Prostate gland (tissue), 2 donors: ENCODE measurements at regions of chrX and their contacts with region 1.

Region 1: GRCh38 chrX:24081661-24082264 is 27.0 kb downstream of the EIF2S3 start:
- DNase-seq: peak; percentile 18
- H3K4me3 ChIP-seq: no peak overlapping the region
- H3K27ac ChIP-seq: no peak overlapping the region
- H3K4me1 ChIP-seq: no peaks in the 10 kb centered on the region
- H3K27me3 ChIP-seq: no peaks in the 10 kb centered on the region
- CTCF ChIP-seq: peak in 1 of 4 experiments; percentile 17
- POLR2A ChIP-seq: no peak

Region 2: GRCh38 chrX:23773601-23774175 is 308.1 kb before region 1 on chrX:
- intact Hi-C with region 1: no loop called
- DNase-seq: no peak
- H3K4me3 ChIP-seq: no peak overlapping the region
- H3K27ac ChIP-seq: no peak overlapping the region
- H3K4me1 ChIP-seq: no peaks in the 10 kb centered on the region
- H3K27me3 ChIP-seq: no peaks in the 10 kb centered on the region
- CTCF ChIP-seq: no peak
- POLR2A ChIP-seq: no peak

Region 3: GRCh38 chrX:24024819-24025740 is 56.7 kb before region 1 on chrX:
- intact Hi-C with region 1: no loop called
- DNase-seq: peak; percentile 74
- H3K4me3 ChIP-seq: peak overlapping the region; percentile 69
- H3K27ac ChIP-seq: peak overlapping the region; percentile 94 to 95
- H3K4me1 ChIP-seq: no peaks in the 10 kb centered on the region
- H3K27me3 ChIP-seq: no peaks in the 10 kb centered on the region
- CTCF ChIP-seq: peak in 2 of 4 experiments; percentile 9 to 37
- POLR2A ChIP-seq: peak; percentile 77

Region 4: DNA sequence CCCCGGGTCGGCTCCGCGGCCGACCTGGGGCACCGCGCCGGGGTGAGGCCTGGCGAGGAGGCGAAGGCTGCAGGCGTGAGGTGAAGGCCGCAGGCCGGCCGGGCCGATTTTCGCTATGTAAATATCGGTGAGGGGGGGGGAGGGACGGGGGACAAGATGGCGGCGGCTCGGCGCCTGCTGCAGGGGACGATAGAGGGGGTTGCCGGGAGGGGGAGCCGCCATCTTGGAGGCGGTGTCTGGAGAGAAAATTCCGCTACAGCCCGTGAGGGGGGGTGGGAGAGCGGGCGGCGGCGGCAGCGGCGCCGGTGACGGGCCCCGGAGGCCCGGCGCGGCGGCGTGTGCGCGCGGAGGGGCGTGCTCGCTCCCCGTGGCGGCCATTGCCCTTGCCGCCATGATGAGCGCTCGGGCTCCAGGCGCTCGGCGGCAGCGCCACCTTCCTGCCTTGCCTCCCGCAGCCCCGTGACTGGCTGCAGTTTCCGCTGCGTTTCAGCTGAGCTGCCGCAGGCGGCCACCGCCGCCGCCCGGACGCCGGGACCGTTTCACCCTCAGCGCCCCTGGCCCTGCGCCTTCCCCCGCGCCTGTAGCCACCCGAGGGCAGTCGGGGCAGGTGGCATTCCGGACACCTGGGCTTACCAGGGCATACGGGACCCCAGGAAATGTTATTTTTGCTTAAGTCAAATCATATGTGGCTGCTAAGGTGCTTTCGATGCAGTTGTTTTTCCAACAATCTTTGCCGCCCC is 68.5 kb after region 1 on chrX:
- intact Hi-C with region 1: loop called (anchors 1 kb)
- DNase-seq: peak; percentile 84
- H3K4me3 ChIP-seq: peak overlapping the region; percentile 49 to 54
- H3K27ac ChIP-seq: peak overlapping the region; percentile 93 to 94
- H3K4me1 ChIP-seq: no peaks in the 10 kb centered on the region
- H3K27me3 ChIP-seq: no peaks in the 10 kb centered on the region
- CTCF ChIP-seq: peak; percentile 30 to 70 (median 50)
- POLR2A ChIP-seq: peak; percentile 34

Region 5: DNA sequence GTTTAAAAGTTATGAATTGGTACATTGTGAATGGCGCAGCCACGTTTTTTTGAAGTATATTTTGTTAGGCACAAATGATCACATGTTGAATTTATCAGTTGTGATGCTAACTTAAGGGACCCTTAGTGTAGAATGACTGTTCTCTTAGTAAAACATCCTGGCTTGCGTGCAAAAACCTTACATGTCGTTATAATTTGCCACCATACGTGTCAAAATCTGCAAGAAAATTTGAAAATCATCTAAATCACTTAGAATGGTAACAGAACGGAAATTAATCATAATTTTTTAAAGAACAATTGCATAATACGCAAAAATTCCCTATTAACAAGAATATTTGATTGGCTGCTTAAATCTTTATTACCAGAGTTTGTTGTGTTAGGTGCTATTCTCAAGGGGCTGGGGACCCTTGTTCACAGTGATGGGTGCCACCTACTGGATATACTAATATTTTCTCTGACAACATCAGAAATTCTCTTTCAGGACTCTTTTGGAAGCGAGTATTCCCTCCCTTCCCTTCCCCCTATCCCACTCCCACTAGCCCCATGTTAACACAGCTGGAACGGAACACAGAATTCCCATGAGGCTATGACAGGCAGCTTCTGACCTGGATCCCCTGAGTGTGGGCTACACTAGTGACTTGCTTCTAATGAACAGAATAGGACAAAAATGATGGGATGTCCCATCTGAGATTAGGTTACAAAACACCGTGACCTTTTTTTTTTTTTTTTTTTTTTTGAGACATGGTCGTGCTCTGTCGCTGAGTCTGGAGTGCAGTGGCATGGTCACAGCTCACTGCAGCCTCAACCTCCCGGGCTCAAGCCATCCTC is 160.3 kb after region 1 on chrX:
- intact Hi-C with region 1: loop called (anchors 5 kb)
- DNase-seq: no peak
- H3K4me3 ChIP-seq: no peak overlapping the region
- H3K27ac ChIP-seq: no peak overlapping the region
- H3K4me1 ChIP-seq: no peaks in the 10 kb centered on the region
- H3K27me3 ChIP-seq: no peaks in the 10 kb centered on the region
- CTCF ChIP-seq: peak in 3 of 4 experiments; percentile 36 to 37 (median 36)
- POLR2A ChIP-seq: no peak

Region 6: DNA sequence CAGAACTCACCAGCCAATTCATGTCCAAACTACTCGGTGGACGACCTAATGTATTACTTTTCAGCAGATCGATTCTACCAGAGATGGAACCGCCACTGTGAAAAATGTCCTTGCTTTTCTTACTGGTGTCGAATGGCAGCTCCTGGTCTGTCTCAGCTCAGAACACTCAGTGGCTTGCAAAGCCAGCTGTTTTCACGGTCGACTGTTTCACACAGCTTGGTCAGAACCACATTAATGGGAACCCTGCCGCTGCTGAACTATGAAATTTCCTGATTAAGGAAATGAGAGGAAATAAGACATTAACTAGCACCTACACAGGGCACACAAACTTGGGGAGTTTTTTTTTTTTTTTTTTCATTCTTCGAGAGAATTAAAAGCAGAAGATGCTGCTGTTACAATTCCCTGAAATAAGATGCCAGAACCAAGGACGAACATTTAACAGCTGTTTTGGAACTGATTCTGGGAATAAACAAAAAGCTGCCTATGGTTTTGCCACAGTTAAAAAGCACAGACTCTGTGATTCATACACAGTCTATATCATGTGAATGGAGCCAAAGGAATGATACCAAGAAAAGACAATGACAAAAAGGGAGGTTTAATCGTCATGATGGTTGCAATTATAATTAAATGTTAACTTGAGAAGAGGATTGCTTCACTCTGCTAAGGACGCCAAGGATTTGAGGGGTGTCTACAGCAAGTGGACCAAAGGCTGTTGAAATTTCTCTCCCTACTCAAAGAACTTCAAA is 200.8 kb after region 1 on chrX:
- intact Hi-C with region 1: no loop called
- DNase-seq: no peak
- H3K4me3 ChIP-seq: no peak overlapping the region
- H3K27ac ChIP-seq: no peak overlapping the region
- H3K4me1 ChIP-seq: no peaks in the 10 kb centered on the region
- H3K27me3 ChIP-seq: no peaks in the 10 kb centered on the region
- CTCF ChIP-seq: no peak
- POLR2A ChIP-seq: no peak